Lower leg skin (tissue), 4 donors: ENCODE measurements at regions of chr5 and their contacts with region 1.

Region 1: DNA sequence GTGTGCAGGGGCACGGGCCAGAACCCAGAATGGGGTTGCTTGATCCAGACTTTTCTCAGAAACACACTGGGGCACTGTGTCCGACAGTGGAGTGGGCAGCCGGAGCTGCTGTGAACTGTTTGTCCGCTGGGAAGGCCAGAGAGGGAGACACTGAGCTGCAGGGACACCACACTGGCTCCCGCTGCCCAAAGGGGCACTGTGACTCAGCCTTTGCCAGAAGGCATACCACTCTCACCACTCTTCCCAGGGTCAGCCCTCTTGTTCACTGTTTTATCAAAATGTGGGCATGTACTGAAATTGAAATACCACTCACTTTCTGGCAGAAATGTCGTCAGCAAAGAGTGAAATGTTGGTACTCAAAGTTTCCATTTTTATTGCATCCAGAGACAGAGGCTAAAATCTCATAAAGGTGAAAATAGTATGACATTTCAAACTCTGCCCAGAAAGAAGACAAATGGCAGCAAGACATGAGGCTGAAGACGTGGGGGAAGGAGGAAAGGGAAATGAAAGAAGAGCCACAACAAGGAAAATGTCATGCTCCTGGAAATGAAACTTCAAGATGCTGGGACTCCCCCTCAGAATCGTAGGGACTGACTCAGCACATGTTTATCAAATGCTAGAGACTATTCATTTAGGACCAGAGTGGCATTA is 4.5 kb upstream of the IL7R start:
- DNase-seq: no peak
- H3K4me3 ChIP-seq: no peak overlapping the region
- CTCF ChIP-seq: no peak
- POLR2A ChIP-seq: no peak

Region 2: GRCh38 chr5:35830587-35830986 is 21.6 kb before region 1 on chr5:
- intact Hi-C with region 1: no loop called
- DNase-seq: no peak
- H3K4me3 ChIP-seq: no peak overlapping the region
- CTCF ChIP-seq: no peak
- POLR2A ChIP-seq: no peak

Region 3: DNA sequence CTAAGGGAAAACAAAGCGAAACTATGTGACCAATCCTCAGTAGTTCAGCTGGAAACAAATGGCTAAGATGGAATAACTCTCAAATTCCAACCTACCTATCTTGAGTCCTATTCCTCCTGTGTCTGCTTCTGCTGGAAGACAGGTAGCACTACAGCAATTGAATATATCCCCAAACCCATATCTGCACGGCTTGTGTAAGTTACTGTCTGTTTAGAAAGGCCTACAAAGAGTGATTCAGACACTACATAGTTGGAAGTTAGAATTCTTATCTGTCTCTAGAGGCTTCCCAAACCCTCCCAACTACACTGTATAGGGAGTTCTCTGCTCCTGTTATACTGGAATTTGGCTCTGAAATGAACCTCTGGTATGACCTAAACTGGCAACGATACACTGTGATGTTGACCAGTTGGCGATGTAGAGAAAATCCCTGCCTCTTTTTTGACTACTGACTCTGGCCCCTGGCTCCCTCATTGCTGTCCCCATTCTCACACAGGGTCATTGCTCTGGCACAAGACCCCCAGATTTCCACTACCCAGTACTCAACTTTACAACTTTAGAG is 412.1 kb after region 1 on chr5:
- intact Hi-C with region 1: loop called (anchors 5 kb)
- DNase-seq: no peak
- H3K4me3 ChIP-seq: no peak overlapping the region
- CTCF ChIP-seq: no peak
- POLR2A ChIP-seq: no peak